ENCODE measurements at regions of chr19 and their contacts with region 1.

Region 1: DNA sequence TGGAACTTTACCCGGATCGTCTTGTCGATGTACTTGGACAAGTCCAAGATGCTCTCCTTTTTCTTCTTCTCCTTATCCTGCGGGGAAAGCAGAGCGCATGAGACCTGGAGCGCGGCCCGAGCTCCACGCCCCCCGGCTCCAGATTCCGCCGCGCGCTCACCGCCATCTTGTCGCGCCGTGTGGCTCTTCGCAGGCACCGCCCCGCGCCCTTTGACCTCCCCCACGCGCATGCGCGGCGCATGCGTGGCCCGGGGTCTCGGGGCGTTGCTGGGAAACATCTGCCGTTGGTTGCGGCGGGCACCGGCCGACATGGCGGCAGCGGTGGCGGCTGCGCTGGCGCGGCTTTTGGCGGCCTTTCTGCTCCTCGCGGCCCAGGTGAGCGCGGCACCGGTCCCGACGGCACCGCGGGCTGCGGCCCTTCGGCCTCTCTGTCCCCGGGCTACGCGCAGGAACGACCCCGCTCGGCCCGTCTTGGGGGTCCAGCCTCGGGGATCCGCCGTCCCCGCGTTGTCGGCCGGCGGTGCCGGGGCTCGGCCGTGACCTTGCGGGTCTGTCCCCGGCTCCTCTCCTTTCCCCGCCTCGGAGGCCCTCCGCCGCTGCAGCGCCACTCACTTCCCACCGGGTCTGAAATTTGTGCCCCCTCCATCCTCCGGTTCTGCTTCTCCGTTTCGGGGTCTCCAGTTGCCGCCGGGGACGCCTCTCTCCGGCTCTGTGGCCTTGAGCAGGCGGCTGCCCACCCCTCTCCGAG is at the starts of genes LSM7 and SPPL2B:
- DNase-seq: peak; percentile 86 to 98 (median 92)
- ATAC-seq: peak; percentile 69
- H3K4me3 ChIP-seq: peak within 1 kb of the TSS; percentile 96
- H3K4me3 Mint-ChIP-seq: peak within 1 kb of the TSS; percentile 100
- H3K27ac ChIP-seq: peak within 1 kb of the TSS; percentile 57 to 78
- H3K27ac Mint-ChIP-seq: peak within 1 kb of the TSS; percentile 93
- H3K4me1 ChIP-seq: peaks cover 70% of the 10 kb centered on the region
- H3K4me1 Mint-ChIP-seq: peaks cover 74% of the 10 kb centered on the region
- H3K27me3 ChIP-seq: no peaks in the 10 kb centered on the region
- H3K27me3 Mint-ChIP-seq: no peaks in the 10 kb centered on the region
- CTCF ChIP-seq: no peak
- total RNA-seq, gene LSM7: 73.6 to 80.1 TPM
- total RNA-seq, gene SPPL2B: 106 to 111 TPM

Region 2: GRCh38 chr19:2289714-2290435 is 38.7 kb before region 1 on chr19:
- CTCF ChIA-PET with region 1: no interaction called
- POLR2A ChIA-PET with region 1: interaction called, 7 read pairs
- intact Hi-C with region 1: loop called (anchors 5 kb)
- DNase-seq: peak in 13 of 14 experiments; percentile 40 to 83 (median 65)
- ATAC-seq: peak; percentile 72
- H3K4me3 ChIP-seq: peak overlapping the region; percentile 69
- H3K4me3 Mint-ChIP-seq: peak overlapping the region; percentile 83
- H3K27ac ChIP-seq: peak overlapping the region; percentile 44 to 50
- H3K27ac Mint-ChIP-seq: peak overlapping the region; percentile 83
- H3K4me1 ChIP-seq: peaks cover 46% of the 10 kb centered on the region
- H3K4me1 Mint-ChIP-seq: peaks cover 26% of the 10 kb centered on the region
- H3K27me3 ChIP-seq: no peaks in the 10 kb centered on the region
- H3K27me3 Mint-ChIP-seq: no peaks in the 10 kb centered on the region
- CTCF ChIP-seq: no peak

Region 3: DNA sequence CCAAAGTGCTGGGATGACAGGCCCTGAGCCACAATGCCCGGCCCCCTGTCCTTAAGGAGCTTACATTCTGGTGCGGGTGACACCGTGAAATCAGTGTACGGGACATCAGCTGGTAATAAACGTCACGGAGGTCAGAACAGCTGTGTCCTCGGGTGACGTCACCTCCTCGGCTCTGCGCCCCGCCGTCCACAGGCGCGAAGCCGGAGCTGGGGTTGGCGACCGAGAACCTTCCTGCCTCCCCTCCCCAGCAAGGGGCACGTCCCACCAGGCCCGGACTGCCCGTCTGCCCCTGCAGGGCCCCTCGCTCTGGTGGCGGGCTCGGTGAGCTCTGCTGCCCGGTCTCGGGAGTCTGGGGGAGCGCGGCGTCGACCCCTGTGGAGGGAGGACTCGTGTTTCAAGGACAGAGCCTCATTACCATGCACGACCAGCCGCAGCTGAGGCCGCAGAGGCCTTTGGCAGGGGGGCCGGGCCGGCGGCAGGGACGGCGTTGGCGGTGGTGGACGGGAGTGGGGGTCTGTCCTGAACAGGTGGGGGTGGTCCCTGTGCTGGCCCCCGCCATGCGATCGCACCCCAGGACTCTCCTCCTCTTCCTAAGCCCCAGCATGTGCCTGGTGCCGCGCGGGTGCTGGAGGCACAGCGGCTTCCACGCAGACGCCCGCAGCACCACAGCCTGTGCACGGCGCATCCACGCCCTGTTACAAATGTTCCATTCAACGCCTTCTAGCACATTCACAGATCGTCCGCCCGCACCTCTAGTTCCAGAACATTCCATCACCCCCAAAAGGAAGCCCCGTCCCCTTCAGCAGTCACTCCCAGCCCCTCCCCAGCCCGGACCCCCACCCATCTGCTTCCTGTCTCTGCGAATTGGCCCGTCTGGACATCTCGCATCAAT is 26.0 kb before region 1 on chr19:
- CTCF ChIA-PET with region 1: no interaction called
- POLR2A ChIA-PET with region 1: no interaction called
- intact Hi-C with region 1: no loop called
- DNase-seq: peak in 3 of 14 experiments; percentile 26 to 63 (median 50)
- ATAC-seq: peak; percentile 80
- H3K4me3 ChIP-seq: peak overlapping the region; percentile 10
- H3K4me3 Mint-ChIP-seq: peak overlapping the region; percentile 54
- H3K27ac ChIP-seq: no peak overlapping the region
- H3K27ac Mint-ChIP-seq: peak overlapping the region; percentile 9
- H3K4me1 ChIP-seq: peaks cover 21% of the 10 kb centered on the region
- H3K4me1 Mint-ChIP-seq: peaks cover 7% of the 10 kb centered on the region
- H3K27me3 ChIP-seq: peaks cover 34 to 36% of the 10 kb centered on the region in 2 experiments
- H3K27me3 Mint-ChIP-seq: peaks cover 42% of the 10 kb centered on the region
- CTCF ChIP-seq: no peak

Measured in CD4-positive, alpha-beta T cell (primary cell).